Psoas muscle (tissue), 8 donors: ENCODE measurements at regions of chr4 and their contacts with region 1.

Region 1: GRCh38 chr4:42568610-42569207 is 88.2 kb downstream of the ATP8A1 start:
- DNase-seq: peak in 1 of 2 donors; percentile 42
- ATAC-seq: peak; percentile 84 to 91 (median 89)
- H3K4me3 ChIP-seq: no peak overlapping the region
- H3K27ac ChIP-seq: no peak overlapping the region
- H3K4me1 ChIP-seq: peaks cover 16% of the 10 kb centered on the region
- H3K27me3 ChIP-seq: no peaks in the 10 kb centered on the region
- CTCF ChIP-seq: peak; percentile 81

Region 2: DNA sequence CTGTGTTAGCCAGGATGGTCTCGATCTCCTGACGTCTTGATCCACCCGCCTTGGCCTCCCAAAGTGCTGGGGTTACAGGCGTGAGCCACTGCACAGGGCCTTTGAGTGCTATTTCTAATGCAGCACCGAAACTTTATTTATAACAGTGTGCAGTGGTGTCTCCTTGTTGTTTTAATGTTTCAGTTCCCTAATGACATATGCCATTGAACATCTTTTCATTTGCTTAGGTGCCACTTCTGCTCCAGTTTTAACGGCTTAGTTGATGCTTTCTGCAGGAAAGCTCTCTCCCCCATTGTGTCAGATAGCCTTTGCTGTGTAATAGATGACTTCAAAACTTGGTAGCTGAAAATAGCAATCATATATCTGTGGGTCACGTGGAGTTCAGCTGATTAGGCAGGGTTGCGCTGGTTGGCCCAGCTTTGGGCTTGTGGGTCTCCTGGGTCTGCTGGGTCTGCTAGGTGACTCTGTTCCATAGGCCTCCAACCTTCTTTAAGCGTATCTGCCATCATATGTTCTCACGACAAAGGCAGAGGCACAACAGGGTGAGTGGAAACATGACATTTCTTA is 247.8 kb before region 1 on chr4:
- intact Hi-C with region 1: no loop called
- DNase-seq: no peak
- ATAC-seq: no peak
- H3K4me3 ChIP-seq: no peak overlapping the region
- H3K27ac ChIP-seq: no peak overlapping the region
- H3K4me1 ChIP-seq: no peaks in the 10 kb centered on the region
- H3K27me3 ChIP-seq: no peaks in the 10 kb centered on the region
- CTCF ChIP-seq: no peak

Region 3: GRCh38 chr4:42656944-42657792 is 88.5 kb after region 1 on chr4 and contains the start of gene ATP8A1:
- intact Hi-C with region 1: loop called in 1 of 2 experiments (anchors 5 kb)
- DNase-seq: peak; percentile 95 to 96
- ATAC-seq: peak; percentile 92 to 97 (median 94)
- H3K4me3 ChIP-seq: peak within 1 kb of the TSS; percentile 88
- H3K27ac ChIP-seq: peak within 1 kb of the TSS; percentile 91
- H3K4me1 ChIP-seq: peaks cover 46% of the 10 kb centered on the region
- H3K27me3 ChIP-seq: no peaks in the 10 kb centered on the region
- CTCF ChIP-seq: peak; percentile 26
- total RNA-seq, gene ATP8A1: 13.8 to 26.5 (median 18.2) TPM

Region 4: DNA sequence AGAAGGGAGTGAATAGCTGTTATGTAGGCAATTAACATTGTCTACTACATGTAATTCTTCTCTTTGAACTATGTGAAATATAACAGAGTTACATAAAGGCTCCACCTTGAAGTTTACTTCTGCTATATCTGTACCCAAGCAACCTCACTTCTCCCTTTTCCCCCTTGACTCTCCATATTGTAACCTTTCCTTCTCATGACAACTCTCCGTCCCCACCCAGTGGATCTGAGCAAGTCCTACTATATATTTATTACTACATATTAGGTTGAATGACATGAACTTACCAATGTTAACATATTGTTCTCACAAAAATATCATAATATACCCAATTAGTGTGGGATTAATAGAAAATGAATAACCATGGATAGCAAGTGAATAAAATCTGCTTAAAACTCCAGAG is 181.4 kb after region 1 on chr4:
- intact Hi-C with region 1: loop called (anchors 5 kb)
- DNase-seq: no peak
- ATAC-seq: peak in 3 of 4 donors; percentile 49 to 83 (median 72)
- H3K4me3 ChIP-seq: no peak overlapping the region
- H3K27ac ChIP-seq: no peak overlapping the region
- H3K4me1 ChIP-seq: no peaks in the 10 kb centered on the region
- H3K27me3 ChIP-seq: peaks cover 0 to 3% (median 0%) of the 10 kb centered on the region in 3 donors
- CTCF ChIP-seq: peak; percentile 36

Region 5: GRCh38 chr4:42816189-42816879 is 247.6 kb after region 1 on chr4:
- intact Hi-C with region 1: loop called in 1 of 2 experiments (anchors 5 kb)
- DNase-seq: no peak
- ATAC-seq: no peak
- H3K4me3 ChIP-seq: no peak overlapping the region
- H3K27ac ChIP-seq: no peak overlapping the region
- H3K4me1 ChIP-seq: no peaks in the 10 kb centered on the region
- H3K27me3 ChIP-seq: no peaks in the 10 kb centered on the region
- CTCF ChIP-seq: no peak

Region 6: DNA sequence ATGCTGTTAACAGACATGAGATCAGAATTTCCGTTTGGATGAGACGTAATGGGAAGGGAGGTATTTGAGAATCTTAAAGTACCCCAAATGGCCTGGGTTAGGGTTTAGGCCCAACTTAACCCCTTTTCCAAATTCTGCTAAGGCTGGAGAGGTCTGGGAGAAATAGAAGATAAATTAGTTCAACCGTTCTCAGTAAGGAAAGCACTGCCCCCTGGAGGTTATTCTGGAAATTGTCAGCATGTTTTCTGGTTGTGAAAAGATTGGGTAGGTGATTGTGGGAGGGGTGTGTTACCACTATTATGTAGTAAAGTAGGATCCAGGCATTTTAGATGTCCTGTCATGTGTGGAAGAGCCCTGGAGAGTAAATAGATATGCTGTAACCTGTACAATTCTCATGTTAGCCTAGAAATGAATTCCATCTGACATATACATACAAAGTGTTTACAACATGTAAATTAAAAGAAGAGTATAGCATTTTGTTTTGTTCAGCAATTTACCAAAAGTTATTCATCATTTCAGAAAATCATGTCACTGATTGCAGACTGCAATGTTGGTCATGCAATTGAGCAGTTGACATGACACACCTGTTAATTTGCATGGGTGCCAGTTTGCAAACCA is 297.0 kb after region 1 on chr4:
- intact Hi-C with region 1: loop called (anchors 2 kb)
- DNase-seq: no peak
- ATAC-seq: peak in 3 of 4 donors; percentile 51 to 60 (median 53)
- H3K4me3 ChIP-seq: no peak overlapping the region
- H3K27ac ChIP-seq: no peak overlapping the region
- H3K4me1 ChIP-seq: no peaks in the 10 kb centered on the region
- H3K27me3 ChIP-seq: peaks cover 0 to 4% (median 0%) of the 10 kb centered on the region in 3 donors
- CTCF ChIP-seq: peak; percentile 80